ENCODE measurements at regions of chr1 and their contacts with region 1.

Region 1: DNA sequence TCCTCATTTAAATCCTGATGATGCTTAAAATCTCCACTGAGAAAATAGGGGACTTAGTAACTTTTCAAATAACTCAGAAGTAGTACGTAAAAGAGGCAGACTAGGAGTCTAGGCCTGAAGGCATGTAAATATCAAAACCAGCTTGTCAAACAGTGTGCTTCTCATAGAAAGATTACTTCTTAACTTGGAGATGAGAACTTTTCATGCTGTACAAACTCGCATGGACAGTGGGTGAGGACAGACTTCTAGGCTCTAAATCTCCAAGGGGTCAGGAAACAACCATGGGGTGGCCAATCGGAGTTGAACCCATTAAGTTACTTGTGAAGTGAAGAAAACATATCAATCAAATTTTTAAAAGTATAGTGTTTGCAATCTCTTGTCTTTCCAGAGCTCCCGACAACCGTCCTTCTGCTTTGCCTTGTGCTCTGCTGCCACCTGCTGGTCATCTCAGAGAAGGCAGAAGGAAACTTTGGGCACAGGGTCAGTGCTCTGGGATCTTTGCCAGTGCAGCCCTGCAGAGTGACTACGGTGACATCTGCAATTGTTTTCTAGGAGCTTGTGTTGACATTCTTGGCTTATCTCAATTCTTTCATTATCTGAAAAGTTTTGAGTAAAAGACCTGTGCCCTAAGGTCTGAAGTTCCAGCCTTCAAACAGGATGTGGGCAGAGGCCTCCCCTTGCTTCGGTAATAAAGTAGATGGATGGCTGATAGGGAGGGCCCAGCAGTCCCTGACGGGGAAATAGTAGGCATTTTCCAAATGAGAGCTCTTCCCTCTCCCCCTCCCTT is 105.1 kb upstream of the PDE4B start:
- DNase-seq: peak; percentile 29 to 95
- H3K4me3 ChIP-seq: no peak overlapping the region
- H3K27ac ChIP-seq: no peak overlapping the region
- H3K4me1 ChIP-seq: peaks cover 0 to 3% (median 0%) of the 10 kb centered on the region in 4 experiments; a peak in 2 of 7 replicates
- H3K27me3 ChIP-seq: no peaks in the 10 kb centered on the region
- CTCF ChIP-seq: peak; percentile 81 to 90 (median 88)
- EP300 ChIP-seq: no peak
- POLR2A ChIP-seq: no peak
- RAD21 ChIP-seq: peak; percentile 99 to 100

Region 2: DNA sequence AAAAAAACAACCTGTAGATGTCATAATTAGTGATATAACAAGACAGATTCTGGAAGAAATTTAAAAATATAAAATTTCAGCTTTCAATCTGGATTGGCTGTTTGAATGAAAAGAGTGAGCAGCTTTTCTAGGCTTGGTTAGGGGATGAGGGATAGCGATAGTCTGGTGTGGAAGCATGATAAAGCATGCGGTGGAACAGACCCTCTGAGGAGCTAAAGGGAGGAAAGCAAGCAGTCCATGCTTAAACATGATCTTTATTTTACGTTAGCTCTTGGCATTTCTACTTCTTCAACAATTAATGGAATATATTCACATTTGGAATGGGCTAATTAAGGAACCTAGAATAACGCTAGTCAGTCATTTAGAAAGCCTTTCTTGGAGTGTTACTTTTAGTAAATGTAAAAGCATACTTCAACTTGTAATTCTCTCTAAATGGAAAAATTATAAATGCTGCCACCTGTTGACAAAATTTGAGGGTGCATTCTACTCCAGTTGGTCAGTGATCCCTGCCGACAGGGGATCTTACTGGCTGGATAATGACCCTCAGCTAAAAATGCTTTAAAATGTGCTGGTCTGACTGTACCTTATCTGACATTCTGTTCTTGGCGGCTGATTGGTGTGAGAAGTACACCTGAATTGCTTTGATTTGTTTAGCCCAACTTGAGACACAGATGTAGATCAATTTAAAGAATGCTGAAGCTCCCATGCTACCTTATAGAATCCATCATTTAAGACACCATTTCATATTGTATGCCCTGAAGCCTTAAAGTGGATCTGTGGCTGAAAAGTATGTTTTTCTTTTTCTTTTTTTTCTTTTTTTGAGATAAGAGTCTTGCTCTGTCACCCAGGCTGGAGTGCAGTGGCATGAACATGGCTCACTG is 478.4 kb before region 1 on chr1:
- CTCF ChIA-PET with region 1: interaction called, 15 read pairs
- POLR2A ChIA-PET with region 1: no interaction called
- DNase-seq: peak in 1 of 2 experiments; percentile 42
- H3K4me3 ChIP-seq: no peak overlapping the region
- H3K27ac ChIP-seq: no peak overlapping the region
- H3K4me1 ChIP-seq: peaks cover 0 to 3% (median 0%) of the 10 kb centered on the region in 4 experiments; a peak in 2 of 7 replicates
- H3K27me3 ChIP-seq: no peaks in the 10 kb centered on the region
- CTCF ChIP-seq: peak; percentile 5 to 54 (median 42)
- EP300 ChIP-seq: no peak
- POLR2A ChIP-seq: no peak
- RAD21 ChIP-seq: peak; percentile 40 to 49

Region 3: DNA sequence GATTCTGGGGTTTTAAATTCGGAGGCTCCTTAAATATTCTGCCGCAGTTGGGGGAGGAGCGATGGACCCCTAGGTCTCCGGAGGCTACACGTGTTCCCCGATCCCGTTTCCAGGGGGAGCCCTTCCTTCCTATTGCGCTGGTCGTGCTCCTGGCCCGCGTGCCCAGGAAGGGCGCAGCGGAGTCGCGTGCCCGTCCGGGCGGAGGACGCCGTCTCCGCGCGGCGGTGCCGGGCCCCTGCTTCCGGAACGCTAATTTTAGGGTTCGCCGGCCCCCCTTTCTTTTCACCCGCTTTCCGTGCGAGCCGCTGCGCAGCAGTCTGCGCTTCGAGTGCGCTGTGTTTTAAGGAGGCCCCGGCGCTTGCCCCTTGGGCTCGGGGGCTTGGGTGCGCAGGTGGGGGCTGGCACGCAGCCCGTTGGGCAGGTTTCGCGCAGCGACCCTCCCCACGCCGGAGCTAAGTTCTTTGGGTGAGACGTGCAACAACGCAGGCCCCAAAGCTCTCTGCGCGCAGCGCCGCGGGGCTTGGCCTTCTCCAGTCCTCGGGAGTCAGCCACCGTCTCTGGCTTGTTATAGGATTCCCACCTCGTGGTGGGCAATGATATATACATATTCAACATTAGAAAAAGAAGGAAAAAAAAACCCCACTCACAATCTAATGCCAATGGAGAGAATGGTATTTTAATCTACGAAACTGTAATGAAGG is 421.8 kb before region 1 on chr1:
- CTCF ChIA-PET with region 1: interaction called, 15 read pairs
- POLR2A ChIA-PET with region 1: no interaction called
- DNase-seq: peak in 1 of 2 experiments; percentile 83
- H3K4me3 ChIP-seq: peak overlapping the region; percentile 41 to 73 (median 50)
- H3K27ac ChIP-seq: peak overlapping the region; percentile 12; the same call in 1 of the 2 replicates
- H3K4me1 ChIP-seq: peaks cover 0 to 5% (median 3%) of the 10 kb centered on the region in 4 experiments; a peak in 5 of 7 replicates
- H3K27me3 ChIP-seq: no peaks in the 10 kb centered on the region; a peak in 3 of 7 replicates
- CTCF ChIP-seq: peak; percentile 49 to 66 (median 54)
- EP300 ChIP-seq: 0 out of 3 replicates have a peak, but pooled peaks of 1 of the 2 experiments have one; percentile 6
- POLR2A ChIP-seq: peak in 1 of 2 experiments; percentile 80; a peak in 2 of 3 replicates
- RAD21 ChIP-seq: peak; percentile 32 to 51; a peak in 3 of 4 replicates

Region 4: DNA sequence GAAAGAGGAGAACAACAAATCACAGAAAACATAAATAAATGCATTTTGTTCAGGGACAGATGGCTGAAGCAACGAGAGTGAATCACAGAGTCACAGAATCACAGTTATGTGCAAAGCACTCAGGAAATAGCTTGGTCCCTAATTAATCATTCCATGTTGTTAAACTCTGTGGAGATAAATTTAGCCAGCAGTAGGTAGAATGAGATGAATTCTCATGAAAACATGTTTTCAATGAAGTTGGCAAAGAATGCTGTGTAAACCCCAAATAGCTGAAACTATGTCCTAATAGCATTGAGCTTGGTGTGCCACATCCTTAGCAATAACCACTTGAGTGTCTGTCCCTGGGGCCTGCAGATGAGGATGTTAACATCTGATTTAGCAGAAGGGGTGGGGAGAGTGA is 246.7 kb before region 1 on chr1:
- CTCF ChIA-PET with region 1: interaction called, 13 read pairs
- POLR2A ChIA-PET with region 1: no interaction called
- DNase-seq: no peak
- H3K4me3 ChIP-seq: no peak overlapping the region
- H3K27ac ChIP-seq: no peak overlapping the region
- H3K4me1 ChIP-seq: peaks cover 0 to 11% (median 7%) of the 10 kb centered on the region in 4 experiments; a peak in 5 of 7 replicates
- H3K27me3 ChIP-seq: no peaks in the 10 kb centered on the region; a peak in 1 of 7 replicates
- CTCF ChIP-seq: no peak
- EP300 ChIP-seq: no peak
- POLR2A ChIP-seq: no peak
- RAD21 ChIP-seq: no peak

Region 5: DNA sequence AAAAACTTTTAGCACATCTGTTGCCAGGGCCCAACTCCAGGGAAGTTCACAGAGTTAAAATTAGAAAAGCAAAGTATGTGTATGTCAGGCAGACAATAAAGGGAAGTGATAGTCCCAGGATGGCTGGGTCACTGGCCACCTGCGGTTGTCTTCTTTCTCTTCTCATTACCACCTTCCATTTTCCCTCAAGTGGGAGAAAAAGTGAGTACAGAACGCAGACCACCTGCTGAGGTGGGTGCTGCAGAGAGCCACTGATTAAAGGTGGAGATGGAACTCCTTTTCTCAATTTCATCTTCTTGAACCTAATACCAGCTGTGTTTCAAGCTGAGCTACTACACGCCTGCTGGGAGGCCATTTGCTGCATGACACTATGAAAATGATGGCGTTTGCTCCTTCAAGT is 16.2 kb after region 1 on chr1:
- CTCF ChIA-PET with region 1: interaction called, 25 read pairs
- POLR2A ChIA-PET with region 1: no interaction called
- DNase-seq: no peak
- H3K4me3 ChIP-seq: no peak overlapping the region
- H3K27ac ChIP-seq: no peak overlapping the region
- H3K4me1 ChIP-seq: no peaks in the 10 kb centered on the region
- H3K27me3 ChIP-seq: no peaks in the 10 kb centered on the region
- CTCF ChIP-seq: no peak
- EP300 ChIP-seq: no peak
- POLR2A ChIP-seq: no peak
- RAD21 ChIP-seq: no peak